ENCODE measurements at regions of chr19 and their contacts with region 1.

Region 1: DNA sequence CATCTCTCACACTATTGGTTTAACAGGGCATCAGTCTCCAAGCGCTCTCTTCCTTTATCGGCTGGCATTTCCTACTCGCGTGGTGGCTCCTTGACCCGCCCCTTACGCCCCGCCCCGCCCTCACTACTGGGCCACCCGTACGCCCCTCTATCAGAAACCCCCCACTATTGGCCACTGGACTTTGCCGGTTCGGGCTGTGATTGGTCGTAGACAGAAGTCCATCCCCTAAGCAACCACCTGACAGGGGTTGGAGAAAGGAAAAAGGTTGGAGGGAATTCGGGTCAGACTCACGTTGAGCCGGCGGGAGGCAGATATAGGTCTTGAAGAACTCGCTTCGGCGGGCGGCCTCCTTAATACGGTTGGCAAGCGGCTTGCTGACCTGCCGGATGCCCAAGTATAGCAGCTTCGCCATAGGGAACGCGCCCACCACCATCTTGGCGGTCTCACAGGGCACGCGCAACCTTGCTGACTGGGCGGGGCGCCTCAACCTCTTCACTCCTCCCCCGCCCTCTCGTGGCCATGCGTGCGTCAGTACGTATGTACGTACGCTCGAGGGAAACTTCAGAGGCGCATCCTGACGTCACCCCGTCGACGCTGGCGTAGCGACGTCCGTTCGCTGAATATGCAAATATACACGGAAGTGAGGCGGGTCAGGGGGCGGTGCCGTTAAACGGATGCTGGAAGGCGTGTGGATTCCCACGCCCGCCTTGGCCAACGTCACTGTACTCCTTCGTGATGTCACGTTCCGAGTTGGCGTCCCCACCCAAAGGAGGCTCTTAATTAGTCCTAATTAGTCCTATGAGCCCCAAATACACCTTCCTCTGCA is at the start of gene OPA3:
- DNase-seq: peak; percentile 97 to 100 (median 99)
- ATAC-seq: peak; percentile 86
- H3K4me3 ChIP-seq: peak within 1 kb of the TSS; percentile 80 to 86
- H3K4me3 Mint-ChIP-seq: peak within 1 kb of the TSS; percentile 96
- H3K27ac ChIP-seq: peak within 1 kb of the TSS; percentile 95 to 99
- H3K27ac Mint-ChIP-seq: peak within 1 kb of the TSS; percentile 99
- H3K4me1 ChIP-seq: peaks cover 6% of the 10 kb centered on the region
- H3K4me1 Mint-ChIP-seq: peaks cover 19% of the 10 kb centered on the region
- H3K27me3 ChIP-seq: no peaks in the 10 kb centered on the region
- H3K27me3 Mint-ChIP-seq: peaks cover 7% of the 10 kb centered on the region
- CTCF ChIP-seq: no peak
- total RNA-seq, gene OPA3: 5.6 to 5.7 TPM

Region 2: GRCh38 chr19:45405435-45406225 is 178.9 kb before region 1 on chr19:
- CTCF ChIA-PET with region 1: no interaction called
- POLR2A ChIA-PET with region 1: interaction called, 3 read pairs
- intact Hi-C with region 1: loop called (anchors 1 kb)
- DNase-seq: peak; percentile 69 to 89 (median 85)
- ATAC-seq: peak; percentile 63
- H3K4me3 ChIP-seq: peak overlapping the region; percentile 63 to 85
- H3K4me3 Mint-ChIP-seq: peak overlapping the region; percentile 97
- H3K27ac ChIP-seq: peak overlapping the region; percentile 68 to 92
- H3K27ac Mint-ChIP-seq: peak overlapping the region; percentile 95
- H3K4me1 ChIP-seq: peaks cover 25% of the 10 kb centered on the region
- H3K4me1 Mint-ChIP-seq: peaks cover 31% of the 10 kb centered on the region
- H3K27me3 ChIP-seq: peaks cover 16 to 26% of the 10 kb centered on the region in 2 experiments
- H3K27me3 Mint-ChIP-seq: peaks cover 26% of the 10 kb centered on the region
- CTCF ChIP-seq: no peak

Region 3: DNA sequence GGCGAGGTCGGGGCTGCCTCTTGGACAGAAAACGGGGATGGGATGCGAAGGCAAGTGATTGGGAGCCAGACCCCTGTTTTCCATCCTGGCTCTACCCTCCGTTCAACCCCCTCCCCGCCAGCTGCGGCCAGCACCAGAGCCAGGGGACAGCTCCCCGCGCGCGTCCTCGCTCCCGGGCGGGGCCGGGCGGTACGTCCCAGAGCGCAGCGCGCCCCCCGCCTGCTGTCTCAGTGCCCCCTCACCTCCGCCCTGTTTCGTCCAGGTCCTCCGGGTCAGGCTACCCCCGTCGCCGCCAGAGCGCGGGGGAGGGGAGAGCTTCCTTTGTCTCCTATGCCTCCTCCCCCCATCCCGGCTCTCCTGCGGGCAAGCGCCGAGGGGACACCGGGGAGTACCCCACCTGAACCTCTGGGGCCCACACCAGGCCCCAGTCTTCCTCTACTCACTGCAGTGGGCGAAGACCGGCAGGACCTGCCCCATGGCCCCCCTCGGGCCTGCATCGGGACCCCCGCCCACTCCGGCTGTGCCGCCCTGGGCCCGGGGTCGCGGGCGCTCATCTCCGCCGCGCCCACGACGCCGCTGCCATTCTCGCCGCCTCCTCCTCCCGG is 88.1 kb before region 1 on chr19:
- CTCF ChIA-PET with region 1: no interaction called
- POLR2A ChIA-PET with region 1: no interaction called
- intact Hi-C with region 1: loop called in 1 of 2 experiments (anchors 2 kb)
- DNase-seq: peak in 6 of 9 experiments; percentile 37 to 68 (median 58)
- ATAC-seq: peak; percentile 16
- H3K4me3 ChIP-seq: peak overlapping the region; percentile 57 to 75
- H3K4me3 Mint-ChIP-seq: peak overlapping the region; percentile 74
- H3K27ac ChIP-seq: no peak overlapping the region
- H3K27ac Mint-ChIP-seq: no peak overlapping the region
- H3K4me1 ChIP-seq: peaks cover 45% of the 10 kb centered on the region
- H3K4me1 Mint-ChIP-seq: peaks cover 37% of the 10 kb centered on the region
- H3K27me3 ChIP-seq: peaks cover 0 to 4% of the 10 kb centered on the region in 2 experiments
- H3K27me3 Mint-ChIP-seq: peaks cover 21% of the 10 kb centered on the region
- CTCF ChIP-seq: no peak

Region 4: GRCh38 chr19:45523642-45524256 is 60.8 kb before region 1 on chr19:
- CTCF ChIA-PET with region 1: no interaction called
- POLR2A ChIA-PET with region 1: no interaction called
- intact Hi-C with region 1: loop called in 1 of 2 experiments (anchors 1 kb)
- DNase-seq: peak; percentile 42 to 90 (median 72)
- ATAC-seq: peak; percentile 99
- H3K4me3 ChIP-seq: no peak overlapping the region
- H3K4me3 Mint-ChIP-seq: no peak overlapping the region
- H3K27ac ChIP-seq: peak overlapping the region in 1 of 2 experiments; percentile 6
- H3K27ac Mint-ChIP-seq: peak overlapping the region; percentile 73
- H3K4me1 ChIP-seq: no peaks in the 10 kb centered on the region
- H3K4me1 Mint-ChIP-seq: peaks cover 11% of the 10 kb centered on the region
- H3K27me3 ChIP-seq: no peaks in the 10 kb centered on the region
- H3K27me3 Mint-ChIP-seq: no peaks in the 10 kb centered on the region
- CTCF ChIP-seq: peak; percentile 75

Region 5: GRCh38 chr19:45730389-45731288 is 146.1 kb after region 1 on chr19 and contains the start of gene FBXO46:
- CTCF ChIA-PET with region 1: no interaction called
- POLR2A ChIA-PET with region 1: no interaction called
- intact Hi-C with region 1: loop called in 1 of 2 experiments (anchors 1 kb)
- DNase-seq: peak; percentile 82 to 97 (median 92)
- ATAC-seq: peak; percentile 98
- H3K4me3 ChIP-seq: peak within 1 kb of the TSS; percentile 74 to 91
- H3K4me3 Mint-ChIP-seq: peak within 1 kb of the TSS; percentile 97
- H3K27ac ChIP-seq: peak within 1 kb of the TSS; percentile 67 to 78
- H3K27ac Mint-ChIP-seq: peak within 1 kb of the TSS; percentile 92
- H3K4me1 ChIP-seq: peaks cover 19% of the 10 kb centered on the region
- H3K4me1 Mint-ChIP-seq: peaks cover 32% of the 10 kb centered on the region
- H3K27me3 ChIP-seq: no peaks in the 10 kb centered on the region
- H3K27me3 Mint-ChIP-seq: no peaks in the 10 kb centered on the region
- CTCF ChIP-seq: no peak
- total RNA-seq, gene FBXO46: 15.2 to 17.1 TPM